ENCODE measurements at regions of chr16 and their contacts with region 1.

Region 1: GRCh38 chr16:67028555-67029248 is at the start of gene CBFB:
- DNase-seq: peak; percentile 97
- H3K27ac ChIP-seq: peak within 1 kb of the TSS; percentile 94
- CTCF ChIP-seq: no peak

Region 2: GRCh38 chr16:67104061-67104460 is 75.4 kb after region 1 on chr16:
- CTCF ChIA-PET with region 1: no interaction called
- POLR2A ChIA-PET with region 1: interaction called, 10 read pairs
- DNase-seq: no peak
- H3K27ac ChIP-seq: no peak overlapping the region
- CTCF ChIP-seq: peak; percentile 14; the same call in 1 of the 2 replicates

Region 3: DNA sequence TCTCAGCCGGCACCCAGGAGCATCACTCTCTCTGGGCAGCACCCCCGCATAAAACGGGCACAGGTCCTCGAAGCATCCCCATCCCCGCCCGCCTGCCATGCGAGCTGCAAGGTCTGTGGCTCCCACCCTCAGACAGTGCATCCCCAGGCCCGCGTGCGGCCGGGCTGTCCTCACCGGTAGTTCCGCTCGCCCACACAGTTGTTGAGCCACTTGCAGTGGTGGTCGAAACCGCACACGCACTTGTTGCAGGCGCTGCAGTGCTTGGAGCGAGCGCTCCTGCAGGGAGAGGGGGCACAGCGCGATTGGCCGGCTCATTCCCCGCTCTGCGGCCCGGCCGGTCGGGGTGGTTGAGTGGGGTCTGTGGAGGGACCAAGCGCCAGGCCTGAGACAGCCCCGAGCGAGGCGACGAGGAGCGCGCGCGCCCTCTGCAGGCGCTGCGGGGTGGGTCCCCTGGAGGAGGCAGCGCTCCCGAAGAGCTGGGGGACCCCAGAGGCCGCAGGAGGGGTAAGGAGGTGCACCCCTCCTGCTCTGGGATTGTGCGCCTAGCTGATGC is 370.6 kb after region 1 on chr16:
- CTCF ChIA-PET with region 1: no interaction called
- POLR2A ChIA-PET with region 1: interaction called, 10 read pairs
- DNase-seq: no peak
- H3K27ac ChIP-seq: no peak overlapping the region
- CTCF ChIP-seq: peak; percentile 81

Measured in RWPE1 (cell line).